Psoas muscle (tissue), 8 donors: ENCODE measurements at regions of chr15 and their contacts with region 1.

Region 1: GRCh38 chr15:86624261-86625036 is 544.8 kb downstream of the AGBL1 start:
- DNase-seq: peak; percentile 88 to 95
- ATAC-seq: peak; percentile 99 to 100 (median 100)
- H3K4me3 ChIP-seq: peak overlapping the region; percentile 32
- H3K27ac ChIP-seq: peak overlapping the region; percentile 84
- H3K4me1 ChIP-seq: peaks cover 10% of the 10 kb centered on the region
- H3K27me3 ChIP-seq: no peaks in the 10 kb centered on the region
- CTCF ChIP-seq: peak; percentile 71

Region 2: GRCh38 chr15:85821545-85821944 is 802.9 kb before region 1 on chr15:
- intact Hi-C with region 1: no loop called
- DNase-seq: no peak
- ATAC-seq: no peak
- H3K4me3 ChIP-seq: no peak overlapping the region
- H3K27ac ChIP-seq: no peak overlapping the region
- H3K4me1 ChIP-seq: no peaks in the 10 kb centered on the region
- H3K27me3 ChIP-seq: no peaks in the 10 kb centered on the region
- CTCF ChIP-seq: no peak

Region 3: GRCh38 chr15:86797135-86797534 is 172.7 kb after region 1 on chr15:
- intact Hi-C with region 1: no loop called
- DNase-seq: no peak
- ATAC-seq: peak in 3 of 4 donors; percentile 22 to 59 (median 54)
- H3K4me3 ChIP-seq: no peak overlapping the region
- H3K27ac ChIP-seq: no peak overlapping the region
- H3K4me1 ChIP-seq: peaks cover 22% of the 10 kb centered on the region
- H3K27me3 ChIP-seq: no peaks in the 10 kb centered on the region
- CTCF ChIP-seq: no peak

Region 4: GRCh38 chr15:86877171-86877646 is 252.8 kb after region 1 on chr15:
- intact Hi-C with region 1: loop called (anchors 1 to 10 kb)
- DNase-seq: peak in 1 of 2 donors; percentile 55
- ATAC-seq: peak; percentile 76 to 84 (median 81)
- H3K4me3 ChIP-seq: no peak overlapping the region
- H3K27ac ChIP-seq: peak overlapping the region; percentile 39
- H3K4me1 ChIP-seq: peaks cover 3% of the 10 kb centered on the region
- H3K27me3 ChIP-seq: no peaks in the 10 kb centered on the region
- CTCF ChIP-seq: peak; percentile 53

Region 5: GRCh38 chr15:87604857-87605446 is 980.5 kb after region 1 on chr15:
- intact Hi-C with region 1: loop called in 1 of 2 experiments (anchors 10 kb)
- DNase-seq: no peak
- ATAC-seq: peak in 2 of 4 donors; percentile 56 to 66
- H3K4me3 ChIP-seq: no peak overlapping the region
- H3K27ac ChIP-seq: no peak overlapping the region
- H3K4me1 ChIP-seq: no peaks in the 10 kb centered on the region
- H3K27me3 ChIP-seq: no peaks in the 10 kb centered on the region
- CTCF ChIP-seq: peak; percentile 48

Region 6: DNA sequence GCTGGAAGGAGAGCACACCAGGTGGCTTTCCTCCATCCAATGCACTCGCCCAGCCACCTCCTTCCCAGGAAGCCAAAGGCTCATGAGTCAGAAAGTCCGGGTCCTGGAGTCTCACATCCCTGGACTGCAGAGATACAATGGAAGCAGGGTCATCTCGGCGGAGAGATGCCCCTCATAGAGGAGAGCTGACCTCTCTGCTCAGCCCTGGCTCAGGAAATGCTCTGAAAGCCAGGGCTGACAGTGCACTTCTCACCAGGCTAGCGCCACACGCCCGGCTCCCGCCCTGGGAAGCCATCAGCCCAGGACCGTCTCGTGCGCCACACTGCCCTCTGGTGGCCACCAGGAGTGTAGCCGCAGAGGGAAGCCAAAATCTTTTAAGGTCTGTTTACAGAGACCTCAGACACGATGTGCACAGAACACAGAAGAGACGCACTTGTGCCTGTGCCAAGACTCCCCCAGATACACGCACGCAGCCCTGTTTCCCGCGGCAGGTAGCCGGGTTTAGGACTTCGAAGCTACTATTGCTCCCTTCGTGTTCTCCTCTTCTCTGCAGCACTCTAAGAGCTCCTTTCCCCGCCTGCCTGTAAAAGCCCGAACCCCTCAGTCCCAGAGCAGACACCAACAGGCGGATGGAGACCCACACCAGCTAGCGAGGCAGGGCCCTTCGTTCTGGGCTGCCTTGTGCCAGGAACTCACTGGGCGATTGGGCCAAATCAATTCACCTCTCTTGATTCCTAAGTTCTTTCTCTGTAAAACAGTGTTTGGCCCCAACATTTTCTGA is 1622.4 kb after region 1 on chr15:
- intact Hi-C with region 1: loop called (anchors 5 kb)
- DNase-seq: peak; percentile 78 to 89
- ATAC-seq: peak; percentile 87 to 96 (median 92)
- H3K4me3 ChIP-seq: no peak overlapping the region
- H3K27ac ChIP-seq: no peak overlapping the region
- H3K4me1 ChIP-seq: peaks cover 10% of the 10 kb centered on the region
- H3K27me3 ChIP-seq: no peaks in the 10 kb centered on the region
- CTCF ChIP-seq: peak; percentile 97

Region 7: GRCh38 chr15:88454867-88455810 is 1830.7 kb after region 1 on chr15:
- intact Hi-C with region 1: loop called in 1 of 2 experiments (anchors 10 kb)
- DNase-seq: peak; percentile 45 to 68
- ATAC-seq: peak; percentile 86 to 94 (median 91)
- H3K4me3 ChIP-seq: no peak overlapping the region
- H3K27ac ChIP-seq: no peak overlapping the region
- H3K4me1 ChIP-seq: no peaks in the 10 kb centered on the region
- H3K27me3 ChIP-seq: no peaks in the 10 kb centered on the region
- CTCF ChIP-seq: peak; percentile 64